Activated CD4-positive, alpha-beta T cell treated with anti-CD3 and anti-CD28 coated beads for 36 hours (primary cell): ENCODE measurements at regions of chr16 and their contacts with region 1.

Region 1: DNA sequence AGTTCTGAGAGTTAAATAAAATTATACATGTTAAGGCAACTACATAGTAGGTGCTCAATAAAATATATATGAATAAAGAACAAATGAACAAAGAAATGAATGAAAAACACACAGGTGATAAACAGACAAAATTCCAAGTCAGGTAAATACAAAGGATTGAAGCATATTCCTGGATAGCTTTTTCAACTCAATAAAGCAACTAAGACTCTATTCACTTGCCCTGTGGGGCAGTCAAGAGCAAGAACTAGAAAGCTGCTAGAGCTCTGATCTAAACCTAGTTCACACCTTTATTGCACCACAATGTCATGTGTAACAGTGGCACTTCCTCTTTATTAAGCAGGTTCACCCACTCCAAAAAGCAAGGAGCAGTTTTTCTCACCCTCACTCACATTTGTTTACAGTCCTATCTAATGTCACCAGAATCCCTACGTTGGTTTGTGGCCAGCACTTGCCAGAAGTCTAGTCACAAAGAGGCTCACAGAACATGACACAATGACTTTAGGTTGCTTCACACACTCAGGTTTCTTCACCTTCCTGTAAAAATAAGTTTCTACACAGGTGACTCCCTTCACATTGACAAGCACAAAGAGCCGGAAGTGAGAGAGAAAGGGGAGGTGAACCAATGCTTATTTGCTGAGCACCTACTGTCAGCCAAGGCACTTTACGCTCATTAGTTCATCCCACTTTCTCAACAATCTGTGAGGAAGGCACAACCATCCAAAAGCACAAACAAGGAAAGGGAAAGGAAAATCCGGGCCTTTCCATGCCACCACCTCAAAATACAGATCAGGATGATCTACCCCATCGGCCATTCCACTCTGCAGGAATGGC is 70.8 kb downstream of the XPO6 start:
- DNase-seq: peak; percentile 85
- ATAC-seq: peak; percentile 82
- H3K4me3 Mint-ChIP-seq: peak overlapping the region; percentile 60
- H3K27ac Mint-ChIP-seq: peak overlapping the region; percentile 99
- H3K4me1 Mint-ChIP-seq: peaks cover 85% of the 10 kb centered on the region
- H3K27me3 Mint-ChIP-seq: no peaks in the 10 kb centered on the region

Region 2: DNA sequence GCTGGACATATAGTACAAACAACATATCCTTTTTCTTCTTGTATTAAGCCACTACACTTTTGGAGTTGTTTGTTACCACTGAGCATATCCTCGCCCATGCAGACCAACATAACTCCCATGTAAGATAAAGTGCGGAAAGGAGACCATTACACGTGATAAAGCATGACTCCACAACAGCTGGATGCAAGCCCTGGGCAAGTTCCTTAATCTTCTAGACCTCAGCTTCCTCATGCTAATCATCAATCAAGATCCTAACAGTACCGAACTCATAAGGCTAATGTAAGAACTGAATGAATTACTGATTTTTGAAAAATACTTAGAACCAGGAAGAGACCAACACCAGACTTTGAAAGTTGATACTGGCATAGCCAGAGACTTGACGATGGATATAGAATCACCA is 30.5 kb before region 1 on chr16:
- CTCF ChIA-PET with region 1: interaction called, 3 read pairs
- POLR2A ChIA-PET with region 1: interaction called, 7 read pairs
- intact Hi-C with region 1: loop called in 1 of 2 experiments (anchors 2 kb)
- DNase-seq: no peak
- ATAC-seq: no peak
- H3K4me3 Mint-ChIP-seq: no peak overlapping the region
- H3K27ac Mint-ChIP-seq: peak overlapping the region; percentile 79
- H3K4me1 Mint-ChIP-seq: peaks cover 24% of the 10 kb centered on the region
- H3K27me3 Mint-ChIP-seq: no peaks in the 10 kb centered on the region

Region 3: DNA sequence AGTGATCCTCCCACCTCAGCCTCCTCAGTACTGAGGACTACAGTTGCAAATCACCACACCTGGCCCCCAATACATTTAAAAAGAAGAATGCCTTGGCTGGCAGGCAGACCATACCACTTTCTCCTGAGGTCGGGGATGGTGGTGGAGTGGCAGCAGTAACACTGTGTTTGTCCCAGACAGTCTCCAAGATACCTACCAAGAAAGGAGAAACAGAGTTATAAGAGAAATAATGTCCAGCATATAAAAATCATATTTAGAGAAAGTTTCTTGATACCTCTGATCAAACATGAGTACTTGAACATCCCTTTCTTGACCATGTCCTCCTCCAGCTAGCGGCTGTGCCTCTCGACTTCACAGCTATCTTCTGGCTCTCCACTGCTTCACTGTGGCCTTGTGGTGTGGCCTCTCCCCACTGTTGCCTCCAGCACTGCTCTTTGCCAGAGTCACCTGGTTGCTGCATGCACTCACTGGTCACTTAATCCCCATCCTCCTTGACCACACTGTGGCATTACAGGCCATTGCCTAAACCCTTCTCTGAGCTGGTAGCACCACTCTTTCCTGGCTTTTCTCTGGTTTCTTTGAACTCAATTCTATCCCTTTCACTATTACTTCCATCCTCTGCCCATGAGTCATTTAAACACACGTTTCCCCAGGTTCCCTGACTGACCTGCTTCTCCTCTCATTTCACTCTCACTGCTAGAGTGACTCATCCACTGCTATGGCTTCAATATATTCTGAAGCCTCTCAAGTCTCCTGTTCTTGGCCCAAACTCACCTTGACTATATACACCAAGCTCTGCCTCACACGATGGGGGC is 25.6 kb after region 1 on chr16:
- CTCF ChIA-PET with region 1: interaction called, 3 read pairs
- POLR2A ChIA-PET with region 1: no interaction called
- intact Hi-C with region 1: loop called (anchors 1 to 2 kb)
- DNase-seq: peak; percentile 53
- ATAC-seq: peak; percentile 92
- H3K4me3 Mint-ChIP-seq: no peak overlapping the region
- H3K27ac Mint-ChIP-seq: peak overlapping the region; percentile 67
- H3K4me1 Mint-ChIP-seq: peaks cover 83% of the 10 kb centered on the region
- H3K27me3 Mint-ChIP-seq: no peaks in the 10 kb centered on the region

Region 4: GRCh38 chr16:28181515-28181914 is 40.5 kb after region 1 on chr16:
- CTCF ChIA-PET with region 1: interaction called, 3 read pairs
- POLR2A ChIA-PET with region 1: no interaction called
- intact Hi-C with region 1: loop called in 1 of 2 experiments (anchors 2 kb)
- DNase-seq: no peak
- ATAC-seq: peak; percentile 28
- H3K4me3 Mint-ChIP-seq: peak overlapping the region; percentile 64
- H3K27ac Mint-ChIP-seq: peak overlapping the region; percentile 98
- H3K4me1 Mint-ChIP-seq: peaks cover 78% of the 10 kb centered on the region
- H3K27me3 Mint-ChIP-seq: no peaks in the 10 kb centered on the region

Region 5: GRCh38 chr16:28193530-28194423 is 52.8 kb after region 1 on chr16:
- CTCF ChIA-PET with region 1: interaction called, 5 read pairs
- POLR2A ChIA-PET with region 1: no interaction called
- intact Hi-C with region 1: loop called (anchors 1 to 2 kb)
- DNase-seq: peak; percentile 78
- ATAC-seq: peak; percentile 67
- H3K4me3 Mint-ChIP-seq: peak overlapping the region; percentile 66
- H3K27ac Mint-ChIP-seq: peak overlapping the region; percentile 92
- H3K4me1 Mint-ChIP-seq: peaks cover 81% of the 10 kb centered on the region
- H3K27me3 Mint-ChIP-seq: no peaks in the 10 kb centered on the region

Region 6: GRCh38 chr16:28218104-28218503 is 77.1 kb after region 1 on chr16:
- CTCF ChIA-PET with region 1: interaction called, 18 read pairs
- POLR2A ChIA-PET with region 1: interaction called, 3 read pairs
- intact Hi-C with region 1: loop called in 1 of 2 experiments (anchors 1 kb)
- DNase-seq: peak; percentile 76
- ATAC-seq: peak; percentile 100
- H3K4me3 Mint-ChIP-seq: no peak overlapping the region
- H3K27ac Mint-ChIP-seq: no peak overlapping the region
- H3K4me1 Mint-ChIP-seq: peaks cover 3% of the 10 kb centered on the region
- H3K27me3 Mint-ChIP-seq: no peaks in the 10 kb centered on the region

Region 7: GRCh38 chr16:28291873-28292660 is 151.1 kb after region 1 on chr16 and contains the start of gene SBK1:
- CTCF ChIA-PET with region 1: no interaction called
- POLR2A ChIA-PET with region 1: no interaction called
- intact Hi-C with region 1: loop called in 1 of 2 experiments (anchors 5 kb)
- DNase-seq: peak; percentile 91
- ATAC-seq: peak; percentile 94
- H3K4me3 Mint-ChIP-seq: peak within 1 kb of the TSS; percentile 84
- H3K27ac Mint-ChIP-seq: peak within 1 kb of the TSS; percentile 93
- H3K4me1 Mint-ChIP-seq: peaks cover 51% of the 10 kb centered on the region
- H3K27me3 Mint-ChIP-seq: no peaks in the 10 kb centered on the region
- total RNA-seq, gene SBK1: 6.5 to 6.6 TPM